MCF 10A (cell line): ENCODE measurements at regions of chr6 and their contacts with region 1.

Region 1: GRCh38 chr6:17392978-17393891 is at the start of gene CAP2:
- DNase-seq: peak; percentile 68
- H3K4me3 Mint-ChIP-seq: peak within 1 kb of the TSS; percentile 93
- H3K27ac Mint-ChIP-seq: peak within 1 kb of the TSS; percentile 29
- H3K4me1 Mint-ChIP-seq: peaks cover 26% of the 10 kb centered on the region
- H3K27me3 Mint-ChIP-seq: no peaks in the 10 kb centered on the region
- CTCF ChIP-seq: no peak
- total RNA-seq, gene CAP2: 12.3 and 14.3 TPM in 2 replicates

Region 2: GRCh38 chr6:17130786-17131185 is 262.4 kb before region 1 on chr6:
- CTCF ChIA-PET with region 1: no interaction called
- POLR2A ChIA-PET with region 1: no interaction called
- intact Hi-C with region 1: no loop called
- DNase-seq: no peak
- H3K4me3 Mint-ChIP-seq: no peak overlapping the region
- H3K27ac Mint-ChIP-seq: no peak overlapping the region
- H3K4me1 Mint-ChIP-seq: no peaks in the 10 kb centered on the region
- H3K27me3 Mint-ChIP-seq: peaks cover 17% of the 10 kb centered on the region
- CTCF ChIP-seq: no peak

Region 3: DNA sequence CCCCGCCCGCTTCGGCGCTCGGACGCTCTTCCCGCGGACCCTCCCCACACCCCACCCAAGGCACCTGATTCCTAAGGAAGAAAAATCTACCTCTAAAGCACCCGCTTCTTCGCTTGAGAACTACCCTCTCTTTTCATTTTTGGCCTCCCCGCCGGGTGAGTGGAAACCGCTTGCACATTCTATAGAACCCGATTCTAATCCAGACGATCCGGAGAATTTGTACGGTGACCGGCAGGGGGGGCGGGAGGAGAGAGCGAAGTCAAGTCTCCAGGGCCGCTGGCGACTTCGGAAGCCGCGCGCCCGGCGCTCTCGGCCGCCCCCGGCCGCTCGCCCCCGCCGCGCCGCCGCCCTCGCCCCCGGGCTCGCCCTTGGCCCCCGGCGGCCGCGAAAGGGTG is 112.1 kb before region 1 on chr6 and contains the start of gene RBM24:
- CTCF ChIA-PET with region 1: no interaction called
- POLR2A ChIA-PET with region 1: no interaction called
- intact Hi-C with region 1: loop called (anchors 5 kb)
- DNase-seq: peak; percentile 34
- H3K4me3 Mint-ChIP-seq: peak within 1 kb of the TSS; percentile 76
- H3K27ac Mint-ChIP-seq: no peak within 1 kb of the TSS
- H3K4me1 Mint-ChIP-seq: peaks cover 16% of the 10 kb centered on the region
- H3K27me3 Mint-ChIP-seq: no peaks in the 10 kb centered on the region
- CTCF ChIP-seq: peak; percentile 33
- total RNA-seq, gene RBM24: not detected in 2 replicates

Region 4: GRCh38 chr6:17574866-17575560 is 181.8 kb after region 1 on chr6:
- CTCF ChIA-PET with region 1: no interaction called
- POLR2A ChIA-PET with region 1: interaction called, 3 read pairs
- intact Hi-C with region 1: loop called (anchors 10 kb)
- DNase-seq: peak; percentile 85
- H3K4me3 Mint-ChIP-seq: no peak overlapping the region
- H3K27ac Mint-ChIP-seq: peak overlapping the region; percentile 31
- H3K4me1 Mint-ChIP-seq: peaks cover 6% of the 10 kb centered on the region
- H3K27me3 Mint-ChIP-seq: no peaks in the 10 kb centered on the region
- CTCF ChIP-seq: no peak